ENCODE measurements at regions of chr1 and their contacts with region 1.

Region 1: DNA sequence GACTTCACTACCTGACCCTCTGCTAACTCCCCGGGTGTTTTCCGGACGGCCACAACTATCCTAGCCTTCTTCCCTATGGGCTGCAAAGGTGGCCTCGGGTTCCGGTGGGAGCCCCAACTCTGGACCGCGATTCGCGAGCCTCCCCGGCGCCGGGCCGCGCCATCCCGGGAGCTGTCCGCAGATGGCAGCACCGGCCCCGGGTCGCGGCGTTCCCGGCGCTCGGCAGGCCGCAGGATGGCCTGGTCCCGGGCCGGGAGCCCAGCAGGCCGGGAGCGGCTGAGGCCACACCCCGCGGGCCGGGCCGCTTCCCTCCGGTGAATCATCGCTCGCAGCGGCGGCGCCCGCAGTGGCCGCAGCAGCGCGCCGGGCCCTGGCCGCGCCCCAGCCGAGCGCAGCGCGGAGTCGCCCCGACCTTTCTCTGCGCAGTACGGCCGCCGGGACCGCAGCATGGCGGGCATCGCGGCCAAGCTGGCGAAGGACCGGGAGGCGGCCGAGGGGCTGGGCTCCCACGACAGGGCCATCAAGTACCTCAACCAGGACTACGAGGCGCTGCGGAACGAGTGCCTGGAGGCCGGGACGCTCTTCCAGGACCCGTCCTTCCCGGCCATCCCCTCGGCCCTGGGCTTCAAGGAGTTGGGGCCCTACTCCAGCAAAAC is at the start of gene CAPN2:
- DNase-seq: peak; percentile 77
- ATAC-seq: peak; percentile 84
- H3K4me3 Mint-ChIP-seq: peak within 1 kb of the TSS; percentile 75
- H3K27ac Mint-ChIP-seq: no peak within 1 kb of the TSS
- H3K4me1 Mint-ChIP-seq: peaks cover 40% of the 10 kb centered on the region
- H3K27me3 Mint-ChIP-seq: peaks cover 74% of the 10 kb centered on the region
- CTCF ChIP-seq: no peak
- total RNA-seq, gene CAPN2: 21.3 to 24.6 TPM (median 24.2 TPM) in 3 replicates

Region 2: DNA sequence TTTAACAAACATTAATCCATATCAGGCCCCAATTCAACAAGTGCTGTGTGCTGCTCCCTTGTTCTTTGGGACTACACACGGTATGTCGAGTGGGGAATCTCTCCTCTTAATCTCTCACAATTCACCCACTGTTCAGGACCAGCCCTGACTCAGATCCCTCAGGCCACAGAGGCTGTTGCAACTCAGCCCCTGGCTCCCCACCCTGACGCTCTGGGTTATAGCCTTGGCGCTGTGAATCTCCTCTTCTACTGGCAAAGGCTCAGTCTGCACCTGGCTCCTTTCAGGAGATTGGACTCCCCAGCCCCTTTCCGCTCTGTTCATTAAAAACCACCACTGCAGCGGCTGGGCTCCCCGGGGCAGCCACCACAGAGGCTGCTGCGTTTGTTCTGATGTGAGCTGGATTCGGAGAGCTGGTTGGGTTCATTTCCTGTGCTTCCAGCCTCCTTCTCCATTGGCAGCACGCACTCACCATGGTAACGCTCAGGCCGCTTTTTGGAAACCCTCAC is 59.8 kb before region 1 on chr1:
- CTCF ChIA-PET with region 1: no interaction called
- POLR2A ChIA-PET with region 1: no interaction called
- DNase-seq: no peak
- ATAC-seq: peak; percentile 70
- H3K4me3 Mint-ChIP-seq: no peak overlapping the region
- H3K27ac Mint-ChIP-seq: no peak overlapping the region
- H3K4me1 Mint-ChIP-seq: peaks cover 26% of the 10 kb centered on the region
- H3K27me3 Mint-ChIP-seq: peaks cover 3% of the 10 kb centered on the region; the same call in 1 of the 2 replicates
- CTCF ChIP-seq: no peak

Region 3: DNA sequence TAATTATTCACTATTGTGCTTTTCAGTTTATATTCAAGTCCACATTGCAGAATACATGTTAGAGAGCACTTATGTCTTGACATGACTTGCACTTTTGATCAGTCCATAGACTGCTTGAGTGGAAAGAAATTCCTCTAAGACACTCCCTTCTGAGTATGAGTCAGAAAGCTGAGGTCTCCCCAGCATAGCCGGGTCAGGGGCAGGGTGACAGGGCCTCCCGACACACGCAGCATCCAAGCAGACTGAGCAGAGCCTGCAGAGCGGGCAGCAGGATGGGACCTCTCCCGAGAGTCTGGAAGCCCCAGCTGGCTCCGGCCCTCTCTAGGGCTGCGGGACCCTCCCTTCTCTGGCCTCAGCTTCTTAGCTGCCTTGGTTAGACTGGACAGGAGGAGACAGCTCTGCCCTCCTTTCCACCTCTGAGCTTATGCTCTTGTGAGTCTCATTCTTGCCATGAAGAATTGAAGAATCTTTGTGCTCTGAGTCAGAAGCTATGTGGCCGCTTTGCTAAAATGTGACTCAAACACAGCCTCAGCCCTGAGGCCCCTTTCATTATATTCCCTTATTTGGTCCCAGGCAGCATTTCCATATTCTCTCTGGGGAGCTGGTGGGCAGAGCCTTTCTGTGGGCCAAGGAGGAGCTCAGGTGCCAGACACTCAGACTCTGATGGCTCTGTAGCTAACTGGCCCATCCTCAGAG is 11.2 kb before region 1 on chr1:
- CTCF ChIA-PET with region 1: interaction called, 12 read pairs
- POLR2A ChIA-PET with region 1: no interaction called
- DNase-seq: no peak
- ATAC-seq: peak; percentile 16; the same call in 1 of the 2 replicates
- H3K4me3 Mint-ChIP-seq: no peak overlapping the region
- H3K27ac Mint-ChIP-seq: no peak overlapping the region
- H3K4me1 Mint-ChIP-seq: peaks cover 4% of the 10 kb centered on the region
- H3K27me3 Mint-ChIP-seq: peaks cover 2% of the 10 kb centered on the region; the same call in 1 of the 2 replicates
- CTCF ChIP-seq: no peak

Measured in WTC11 (cell line).